ENCODE measurements at regions of chr18 and their contacts with region 1.

Region 1: GRCh38 chr18:59988098-59988706 is 88.4 kb downstream of the PMAIP1 start:
- DNase-seq: peak; percentile 71 to 84 (median 77)
- H3K4me3 ChIP-seq: no peak overlapping the region
- H3K27ac ChIP-seq: no peak overlapping the region
- H3K4me1 ChIP-seq: peaks cover 0 to 10% (median 0%) of the 10 kb centered on the region in 4 experiments
- H3K27me3 ChIP-seq: peaks cover 3 to 32% (median 18%) of the 10 kb centered on the region in 5 experiments

Region 2: DNA sequence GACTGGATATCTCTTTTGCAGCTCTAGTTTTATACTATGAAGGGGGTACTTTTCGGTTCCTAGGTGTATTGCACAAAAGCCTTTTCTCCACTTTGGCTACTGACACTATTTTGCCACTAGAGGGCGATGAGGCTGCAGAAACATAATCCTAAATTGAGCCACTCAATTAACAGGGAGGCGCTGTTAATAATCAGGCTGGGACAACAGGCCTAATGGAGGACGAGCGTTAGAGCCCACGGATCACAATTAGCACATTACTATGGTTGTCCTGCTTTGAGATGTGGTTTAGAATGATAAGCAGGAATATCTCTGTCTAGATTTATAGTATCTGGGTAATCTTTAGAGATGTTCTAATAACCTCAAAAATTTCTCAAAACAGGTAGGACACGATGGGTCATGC is 150.6 kb before region 1 on chr18:
- CTCF ChIA-PET with region 1: interaction called, 40 read pairs
- POLR2A ChIA-PET with region 1: no interaction called
- DNase-seq: peak; percentile 77 to 83 (median 78)
- H3K4me3 ChIP-seq: no peak overlapping the region
- H3K27ac ChIP-seq: no peak overlapping the region
- H3K4me1 ChIP-seq: no peaks in the 10 kb centered on the region
- H3K27me3 ChIP-seq: peaks cover 0 to 2% (median 0%) of the 10 kb centered on the region in 5 experiments

Region 3: GRCh38 chr18:59911600-59911999 is 76.6 kb before region 1 on chr18:
- CTCF ChIA-PET with region 1: no interaction called
- POLR2A ChIA-PET with region 1: no interaction called
- DNase-seq: peak in 1 of 3 donors; percentile 50
- H3K4me3 ChIP-seq: no peak overlapping the region
- H3K27ac ChIP-seq: peak overlapping the region in 1 of 2 experiments; percentile 17
- H3K4me1 ChIP-seq: peaks cover 5 to 35% (median 16%) of the 10 kb centered on the region in 4 experiments
- H3K27me3 ChIP-seq: no peaks in the 10 kb centered on the region

Region 4: DNA sequence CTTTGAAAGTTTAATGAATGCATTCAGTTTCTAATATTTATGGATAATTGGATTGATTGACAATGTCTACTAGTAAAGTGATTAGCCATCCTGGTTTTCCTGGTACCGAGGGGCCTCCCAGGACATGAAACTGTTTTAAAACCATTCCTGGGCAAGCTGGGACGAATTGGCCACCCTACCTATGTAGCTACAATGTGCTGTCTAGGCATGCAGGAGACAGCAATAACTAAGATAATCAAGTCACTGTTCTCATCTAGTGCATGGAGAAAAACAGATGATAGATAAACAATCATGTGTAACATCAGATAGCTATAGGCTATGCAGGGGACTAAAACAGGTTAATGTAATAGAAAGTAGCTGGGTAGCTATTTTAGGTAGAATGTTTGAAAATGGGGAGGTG is 21.3 kb before region 1 on chr18:
- CTCF ChIA-PET with region 1: interaction called, 11 read pairs
- POLR2A ChIA-PET with region 1: no interaction called
- DNase-seq: no peak
- H3K4me3 ChIP-seq: no peak overlapping the region
- H3K27ac ChIP-seq: no peak overlapping the region
- H3K4me1 ChIP-seq: no peaks in the 10 kb centered on the region
- H3K27me3 ChIP-seq: peaks cover 0 to 20% (median 3%) of the 10 kb centered on the region in 5 experiments

Region 5: DNA sequence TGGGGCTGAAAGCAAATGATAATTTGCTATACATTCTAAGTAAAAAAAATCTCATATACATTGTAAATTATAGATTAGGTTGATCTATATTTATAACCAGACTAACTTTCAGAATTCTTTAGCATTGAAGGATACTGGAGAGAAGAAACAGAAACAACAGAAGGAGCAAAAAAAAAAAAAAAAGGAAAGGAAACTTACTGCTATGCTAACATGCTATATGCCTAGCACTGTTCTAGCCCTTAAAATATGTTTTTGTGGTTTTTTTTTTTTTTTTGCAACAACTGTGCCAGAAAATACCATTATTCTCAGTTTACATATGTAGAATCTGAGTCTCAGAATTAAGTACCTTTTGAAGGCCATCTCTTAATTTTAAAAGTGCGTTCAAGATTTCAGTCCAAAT is 589.3 kb after region 1 on chr18:
- CTCF ChIA-PET with region 1: no interaction called
- POLR2A ChIA-PET with region 1: no interaction called
- DNase-seq: no peak
- H3K4me3 ChIP-seq: no peak overlapping the region
- H3K27ac ChIP-seq: no peak overlapping the region
- H3K4me1 ChIP-seq: no peaks in the 10 kb centered on the region
- H3K27me3 ChIP-seq: no peaks in the 10 kb centered on the region

Measured in common myeloid progenitor, CD34-positive (primary cell).